Cardiac septum (tissue), 1 donor: ENCODE measurements at regions of chr1 and their contacts with region 1.

Region 1: DNA sequence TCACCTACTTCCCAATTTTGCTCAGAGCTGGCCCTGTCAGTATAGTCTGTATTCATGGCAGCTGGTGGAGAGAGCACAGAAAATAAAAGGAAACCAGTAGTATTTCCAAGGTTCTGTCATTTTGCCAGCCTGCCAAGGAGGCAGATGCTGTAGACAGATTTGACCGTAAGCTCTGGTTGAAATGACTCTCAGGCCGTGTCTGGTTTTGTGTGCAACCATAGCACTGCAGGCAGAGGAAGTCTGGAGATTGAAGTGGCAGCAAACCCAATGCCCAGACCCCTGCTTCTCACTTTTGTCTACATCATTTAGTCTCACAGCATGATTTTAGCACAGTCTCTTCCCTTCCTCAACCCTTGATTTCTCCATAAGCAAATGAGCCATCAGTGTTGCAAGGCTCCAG is 291.7 kb downstream of the PAPPA2 start:
- DNase-seq: no peak

Region 2: DNA sequence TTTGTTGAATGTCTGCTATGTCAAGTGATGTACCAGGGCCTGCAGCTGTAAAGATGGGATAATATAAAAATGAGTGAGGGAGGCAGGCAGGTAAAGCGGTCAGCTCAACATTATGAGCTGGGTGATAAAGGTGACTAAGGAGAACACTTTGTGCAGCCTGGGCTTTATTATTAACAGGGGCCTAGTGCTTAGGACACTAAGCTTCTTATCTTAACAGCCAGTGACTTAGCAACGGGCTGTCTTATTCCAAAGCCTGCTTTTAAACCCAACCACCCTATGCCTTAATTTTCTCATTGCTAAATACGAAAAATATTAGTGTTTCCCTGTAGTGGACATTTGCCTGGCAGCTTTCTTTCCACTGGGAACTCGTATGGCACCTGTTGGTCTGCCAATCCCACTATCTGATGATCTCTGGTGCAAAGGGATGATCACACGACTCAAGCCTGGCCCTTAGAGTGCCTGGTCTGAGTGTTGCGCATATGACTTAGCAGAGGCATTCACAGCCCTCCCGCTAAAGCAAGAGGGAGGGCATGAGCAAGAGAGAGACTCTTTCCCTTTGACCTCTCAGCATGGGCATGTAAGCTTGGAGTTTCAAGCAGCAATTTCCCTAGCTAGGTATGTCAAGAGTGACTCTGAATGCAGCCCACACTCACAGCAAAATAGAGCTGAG is 390.3 kb before region 1 on chr1:
- intact Hi-C with region 1: loop called (anchors 5 kb)
- DNase-seq: no peak

Region 3: DNA sequence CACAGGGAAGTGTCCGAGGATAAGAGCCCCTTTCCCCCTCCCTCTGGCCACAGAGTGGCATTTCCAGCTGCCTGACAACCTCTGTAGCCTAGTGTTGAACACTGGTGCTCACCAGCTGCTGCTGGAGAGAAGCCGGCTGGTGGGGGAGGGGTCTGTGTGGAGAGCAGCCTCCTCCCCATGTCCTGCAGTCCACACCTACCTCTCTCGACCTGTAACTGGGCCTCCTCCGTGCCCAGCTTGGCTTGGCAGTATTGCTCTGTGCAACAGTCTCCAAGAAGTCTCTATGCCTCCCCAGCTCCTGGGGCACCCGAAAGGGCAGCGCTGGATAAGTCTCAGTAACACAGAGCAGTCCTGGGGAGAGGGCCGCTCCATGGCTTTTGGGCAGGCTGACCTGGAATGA is 274.7 kb before region 1 on chr1:
- intact Hi-C with region 1: no loop called
- DNase-seq: no peak

Region 4: GRCh38 chr1:176701151-176701866 is 53.4 kb before region 1 on chr1:
- intact Hi-C with region 1: no loop called
- DNase-seq: no peak

Region 5: DNA sequence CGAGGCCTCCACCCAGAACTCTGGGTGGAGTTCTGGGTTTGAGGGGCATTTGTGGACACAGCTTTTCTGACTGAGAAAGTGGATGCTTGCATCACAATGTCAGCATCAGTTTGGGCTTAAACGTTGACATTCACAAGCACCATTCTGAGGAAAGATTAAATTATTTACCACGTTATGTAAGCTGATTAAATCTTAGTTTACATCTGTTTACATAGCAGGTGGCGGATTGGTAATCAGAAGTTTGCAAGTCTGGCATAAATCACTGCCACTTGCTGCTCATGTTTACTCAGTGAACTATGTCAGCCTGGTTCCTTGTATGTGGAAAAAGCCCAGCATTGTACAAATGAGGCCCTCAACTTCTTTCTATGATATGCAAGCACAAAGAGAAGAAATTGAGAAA is 18.4 kb after region 1 on chr1:
- intact Hi-C with region 1: no loop called
- DNase-seq: no peak

Region 6: DNA sequence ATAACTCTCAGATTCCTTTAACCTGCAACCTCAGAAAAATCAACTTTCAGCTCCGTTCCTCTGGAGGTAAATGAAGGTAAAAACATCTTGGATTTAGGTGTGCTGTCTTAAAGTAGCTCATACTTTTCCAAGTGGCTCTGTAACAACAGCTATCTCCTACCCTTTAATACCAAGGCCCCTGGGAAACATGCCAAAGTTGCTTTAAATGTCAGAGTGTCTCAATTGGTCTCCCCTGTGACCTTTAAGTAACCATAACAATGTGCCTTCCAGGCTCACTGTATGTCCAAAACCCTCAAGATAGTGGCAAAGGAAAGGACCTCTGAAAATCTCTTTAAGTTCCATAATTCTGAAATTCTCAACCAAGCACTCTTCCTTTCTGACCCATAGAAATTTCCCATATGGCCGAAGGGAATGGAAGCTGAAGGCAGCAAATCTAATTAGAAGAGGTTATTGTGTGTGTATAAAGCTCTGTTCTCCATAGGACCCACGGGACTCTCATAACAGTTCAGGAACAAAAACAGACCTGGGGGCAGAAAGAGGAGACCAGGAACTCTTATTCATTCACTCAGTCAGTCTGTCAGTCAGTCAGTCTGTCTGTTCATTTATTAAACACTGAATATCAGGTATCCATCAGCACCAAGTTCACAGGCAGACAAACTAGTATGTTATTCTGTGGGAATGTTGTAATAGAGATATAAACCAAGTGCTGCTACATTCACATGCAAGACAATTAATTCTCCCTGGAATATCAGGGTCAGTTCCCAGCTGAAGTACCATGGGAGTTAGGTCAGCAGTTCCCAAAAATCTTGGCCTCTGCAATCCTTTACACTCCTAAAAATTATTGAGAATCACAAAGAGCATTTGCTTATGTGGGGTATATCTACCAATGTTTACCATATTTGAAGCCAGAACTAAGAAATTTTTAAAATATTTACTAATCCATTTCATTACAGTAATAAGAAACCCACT is 390.7 kb after region 1 on chr1:
- intact Hi-C with region 1: no loop called
- DNase-seq: no peak